Heart right ventricle (tissue), 16 donors: ENCODE measurements at regions of chr22 and their contacts with region 1.

Region 1: GRCh38 chr22:28594797-28595462 is 84.7 kb downstream of the TTC28 start:
- DNase-seq: no peak
- ATAC-seq: peak; percentile 70 to 92 (median 90)
- H3K4me3 ChIP-seq: no peak overlapping the region
- H3K27ac ChIP-seq: no peak overlapping the region
- H3K4me1 ChIP-seq: peaks cover 0 to 8% (median 0%) of the 10 kb centered on the region in 9 donors
- H3K27me3 ChIP-seq: no peaks in the 10 kb centered on the region
- CTCF ChIP-seq: peak; percentile 49 to 91 (median 76)

Region 2: DNA sequence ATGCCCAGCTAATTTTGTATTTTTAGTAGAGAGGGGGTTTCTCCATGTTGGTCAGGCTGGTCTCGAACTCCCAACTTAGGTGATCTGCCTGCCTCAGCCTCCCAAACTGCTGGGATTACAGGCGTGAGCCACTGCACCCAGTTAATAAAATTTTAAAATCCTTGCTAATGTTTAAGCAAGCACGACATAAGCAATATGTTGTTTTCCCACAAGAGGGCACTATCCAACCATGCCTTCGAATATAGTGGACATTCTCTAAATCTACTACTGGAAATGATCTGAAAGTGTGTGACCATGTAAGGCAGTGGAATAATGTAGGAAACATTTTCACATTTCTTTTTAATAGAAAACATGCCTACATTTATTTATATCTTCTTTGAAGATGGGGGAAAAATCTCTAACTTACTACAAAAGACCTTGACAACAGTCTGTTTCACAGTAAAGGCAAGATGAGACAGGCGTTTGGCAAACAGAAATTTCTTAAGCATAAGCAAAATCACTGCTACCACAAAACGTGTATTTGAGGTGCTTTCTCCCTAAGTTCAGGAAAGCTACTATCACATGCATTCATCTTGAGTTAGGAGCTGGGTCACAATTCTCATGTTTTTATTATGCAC is 714.0 kb before region 1 on chr22:
- intact Hi-C with region 1: loop called in 5 of 10 experiments (anchors 5 to 10 kb)
- DNase-seq: peak in 1 of 2 donors; percentile 68
- ATAC-seq: peak; percentile 58 to 89 (median 80)
- H3K4me3 ChIP-seq: no peak overlapping the region
- H3K27ac ChIP-seq: peak overlapping the region in 7 of 10 donors; percentile 10 to 46 (median 33)
- H3K4me1 ChIP-seq: peaks cover 3 to 77% (median 67%) of the 10 kb centered on the region in 9 donors
- H3K27me3 ChIP-seq: no peaks in the 10 kb centered on the region
- CTCF ChIP-seq: peak; percentile 76 to 87 (median 83)

Region 3: GRCh38 chr22:28043266-28043665 is 551.7 kb before region 1 on chr22:
- intact Hi-C with region 1: loop called in 2 of 10 experiments (anchors 5 to 10 kb)
- DNase-seq: no peak
- ATAC-seq: peak in 5 of 8 donors; percentile 30 to 59 (median 44)
- H3K4me3 ChIP-seq: no peak overlapping the region
- H3K27ac ChIP-seq: peak overlapping the region in 1 of 10 donors; percentile 0
- H3K4me1 ChIP-seq: peaks cover 0 to 23% (median 6%) of the 10 kb centered on the region in 9 donors
- H3K27me3 ChIP-seq: no peaks in the 10 kb centered on the region
- CTCF ChIP-seq: no peak

Region 4: DNA sequence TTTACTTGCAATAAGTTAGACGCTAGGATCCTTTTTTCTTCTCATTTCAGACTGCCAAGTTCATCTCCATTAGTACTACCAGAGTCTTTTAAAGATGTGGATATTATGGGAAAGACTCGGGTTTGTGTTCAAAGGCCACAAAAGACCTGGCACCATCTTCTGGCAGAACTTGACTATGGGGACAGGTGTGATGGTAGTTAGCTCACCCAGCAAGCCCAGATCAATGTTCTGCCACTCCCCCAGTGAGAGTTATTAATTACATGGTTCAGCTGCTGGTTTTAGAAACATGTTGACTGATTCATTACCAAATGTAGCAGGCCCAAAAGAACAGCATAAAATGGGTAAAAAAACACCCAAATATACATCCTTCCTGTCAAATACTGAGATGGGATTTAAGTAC is 342.4 kb before region 1 on chr22:
- intact Hi-C with region 1: loop called in 1 of 10 experiments (anchors 10 kb)
- DNase-seq: no peak
- ATAC-seq: no peak
- H3K4me3 ChIP-seq: no peak overlapping the region
- H3K27ac ChIP-seq: no peak overlapping the region
- H3K4me1 ChIP-seq: peaks cover 0 to 32% (median 17%) of the 10 kb centered on the region in 9 donors
- H3K27me3 ChIP-seq: no peaks in the 10 kb centered on the region
- CTCF ChIP-seq: no peak

Region 5: GRCh38 chr22:28394513-28395110 is 200.3 kb before region 1 on chr22:
- intact Hi-C with region 1: no loop called
- DNase-seq: no peak
- ATAC-seq: no peak
- H3K4me3 ChIP-seq: no peak overlapping the region
- H3K27ac ChIP-seq: no peak overlapping the region
- H3K4me1 ChIP-seq: peaks cover 0 to 35% (median 23%) of the 10 kb centered on the region in 9 donors
- H3K27me3 ChIP-seq: no peaks in the 10 kb centered on the region
- CTCF ChIP-seq: no peak

Region 6: DNA sequence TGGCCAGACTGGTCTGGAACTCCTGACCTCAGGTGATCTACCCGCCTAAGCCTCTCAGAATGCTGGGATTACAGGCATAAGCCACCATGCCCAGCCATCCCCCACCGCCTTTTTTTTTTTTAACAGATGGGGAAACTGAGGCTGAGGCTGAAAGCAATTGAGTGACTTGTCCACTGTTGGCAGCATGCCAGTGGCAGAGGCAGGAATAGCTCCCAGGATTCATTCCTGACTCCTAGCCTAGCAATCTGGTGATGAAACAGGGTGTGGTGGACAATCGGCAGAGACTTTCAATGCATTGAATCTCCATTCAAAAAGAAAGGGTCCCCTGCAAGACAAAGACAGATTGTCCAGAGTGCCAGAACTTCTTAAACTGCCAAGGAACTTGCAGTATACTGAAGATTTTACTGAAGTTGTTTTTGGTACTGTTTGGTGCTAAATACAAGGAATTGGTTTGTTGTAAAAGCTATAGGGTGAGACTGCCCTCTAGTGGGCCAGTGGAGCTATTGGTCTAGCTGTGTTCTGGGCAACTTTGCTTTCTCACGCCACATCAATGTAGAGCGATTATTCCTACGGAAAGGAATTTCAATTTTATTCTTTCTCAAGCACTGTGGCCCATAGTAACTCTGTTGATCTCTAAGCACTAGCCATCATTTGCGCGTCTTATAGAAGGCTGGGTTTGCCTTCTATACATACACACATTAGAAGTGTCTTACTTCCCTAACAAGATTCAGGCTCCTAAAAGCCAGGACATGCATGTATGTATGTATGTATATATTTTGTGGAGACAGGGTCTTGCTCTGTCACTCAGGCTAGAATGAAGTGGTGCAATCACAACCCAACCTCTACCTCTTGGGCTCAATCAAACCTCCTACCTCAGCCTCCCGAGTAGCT is 445.7 kb after region 1 on chr22:
- intact Hi-C with region 1: loop called in 7 of 10 experiments (anchors 5 to 10 kb)
- DNase-seq: peak; percentile 29 to 73
- ATAC-seq: peak; percentile 67 to 84 (median 76)
- H3K4me3 ChIP-seq: no peak overlapping the region
- H3K27ac ChIP-seq: peak overlapping the region in 1 of 10 donors; percentile 18
- H3K4me1 ChIP-seq: peaks cover 0 to 14% (median 4%) of the 10 kb centered on the region in 9 donors
- H3K27me3 ChIP-seq: no peaks in the 10 kb centered on the region
- CTCF ChIP-seq: peak; percentile 90 to 99 (median 97)